Activated CD4-positive, alpha-beta memory T cell treated with anti-CD3 and anti-CD28 coated beads for 36 hours (primary cell): ENCODE measurements at regions of chr19 and their contacts with region 1.

Region 1: DNA sequence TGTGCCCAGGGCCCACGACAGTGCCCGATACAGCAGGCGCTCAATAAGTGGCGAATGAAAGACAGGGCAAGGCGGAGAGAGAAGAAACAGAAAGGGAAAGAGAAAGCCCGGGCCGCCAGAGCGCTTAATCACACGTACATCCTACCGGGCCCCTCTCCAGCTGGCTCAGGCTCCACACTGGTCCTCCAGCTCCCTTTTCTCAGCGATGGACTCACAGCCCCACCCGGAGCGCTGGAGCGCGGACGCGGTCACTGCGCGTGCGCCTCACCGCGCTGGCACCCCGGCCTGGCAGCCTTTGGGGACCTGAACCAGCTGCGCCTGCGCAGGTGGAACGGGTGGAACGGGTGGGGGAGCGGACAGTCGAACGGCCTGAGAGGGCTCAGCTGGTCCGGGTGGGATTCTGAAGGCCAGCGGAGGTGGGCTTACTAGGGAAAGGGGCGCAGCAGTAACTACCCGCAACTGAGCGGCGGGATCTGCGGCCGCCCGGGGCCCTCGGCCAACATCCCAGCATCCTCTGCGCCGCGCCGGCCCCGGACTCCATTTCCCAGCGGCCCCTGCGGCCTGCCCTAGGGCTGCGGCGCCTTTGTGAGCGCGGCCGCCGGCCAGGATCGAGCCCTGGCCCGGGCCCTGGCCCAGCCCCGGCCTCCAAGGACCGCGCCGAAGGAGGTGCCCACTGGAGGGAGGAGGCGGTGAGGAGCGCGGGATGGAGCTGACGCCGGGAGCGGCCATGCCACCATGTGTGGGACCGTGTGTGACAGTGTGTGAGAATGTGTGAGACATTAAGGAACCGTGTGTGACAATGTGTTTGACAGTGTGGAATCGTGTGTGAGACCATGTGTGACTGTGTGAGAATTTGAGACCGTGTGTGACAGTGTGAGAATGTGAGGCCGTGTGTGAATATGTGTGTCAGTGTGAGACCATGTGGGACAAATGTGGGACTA is at the start of gene ZNF583:
- DNase-seq: peak; percentile 94
- H3K4me3 Mint-ChIP-seq: peak within 1 kb of the TSS; percentile 76
- H3K27ac Mint-ChIP-seq: peak within 1 kb of the TSS; percentile 98
- H3K4me1 Mint-ChIP-seq: peaks cover 27% of the 10 kb centered on the region
- H3K27me3 Mint-ChIP-seq: no peaks in the 10 kb centered on the region
- total RNA-seq, gene ZNF583: 1.6 to 1.8 TPM

Region 2: DNA sequence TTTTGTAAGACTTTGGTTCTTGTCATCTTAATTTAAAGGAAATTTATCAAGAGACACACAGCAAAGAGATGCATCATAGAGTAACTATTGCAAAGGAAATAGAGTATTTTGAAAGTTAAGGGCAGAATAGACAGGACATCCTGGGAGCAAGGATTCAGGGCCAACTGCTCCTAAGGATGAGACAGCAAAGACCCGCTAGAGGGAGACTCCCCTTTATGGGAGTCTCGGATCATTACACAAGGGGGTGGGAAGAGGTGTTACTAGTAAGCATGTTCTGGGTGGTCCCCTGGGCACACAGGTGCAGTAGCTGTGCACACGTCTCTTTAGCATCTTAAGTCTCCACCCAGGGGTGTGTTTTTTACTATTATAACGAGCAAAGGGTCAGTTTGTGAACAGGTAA is 192.3 kb before region 1 on chr19:
- CTCF ChIA-PET with region 1: no interaction called
- POLR2A ChIA-PET with region 1: no interaction called
- intact Hi-C with region 1: no loop called
- DNase-seq: no peak
- H3K4me3 Mint-ChIP-seq: no peak overlapping the region
- H3K27ac Mint-ChIP-seq: no peak overlapping the region
- H3K4me1 Mint-ChIP-seq: peaks cover under 1% of the 10 kb centered on the region
- H3K27me3 Mint-ChIP-seq: peaks cover 9% of the 10 kb centered on the region

Region 3: GRCh38 chr19:56393119-56394012 is 10.7 kb before region 1 on chr19 and contains the start of gene ZNF582:
- CTCF ChIA-PET with region 1: no interaction called
- POLR2A ChIA-PET with region 1: interaction called, 6 read pairs
- intact Hi-C with region 1: loop called (anchors 1 kb)
- DNase-seq: peak; percentile 94
- H3K4me3 Mint-ChIP-seq: peak within 1 kb of the TSS; percentile 77
- H3K27ac Mint-ChIP-seq: peak within 1 kb of the TSS; percentile 84
- H3K4me1 Mint-ChIP-seq: peaks cover 7% of the 10 kb centered on the region
- H3K27me3 Mint-ChIP-seq: no peaks in the 10 kb centered on the region
- total RNA-seq, gene ZNF582: 0.58 to 0.71 TPM

Region 4: DNA sequence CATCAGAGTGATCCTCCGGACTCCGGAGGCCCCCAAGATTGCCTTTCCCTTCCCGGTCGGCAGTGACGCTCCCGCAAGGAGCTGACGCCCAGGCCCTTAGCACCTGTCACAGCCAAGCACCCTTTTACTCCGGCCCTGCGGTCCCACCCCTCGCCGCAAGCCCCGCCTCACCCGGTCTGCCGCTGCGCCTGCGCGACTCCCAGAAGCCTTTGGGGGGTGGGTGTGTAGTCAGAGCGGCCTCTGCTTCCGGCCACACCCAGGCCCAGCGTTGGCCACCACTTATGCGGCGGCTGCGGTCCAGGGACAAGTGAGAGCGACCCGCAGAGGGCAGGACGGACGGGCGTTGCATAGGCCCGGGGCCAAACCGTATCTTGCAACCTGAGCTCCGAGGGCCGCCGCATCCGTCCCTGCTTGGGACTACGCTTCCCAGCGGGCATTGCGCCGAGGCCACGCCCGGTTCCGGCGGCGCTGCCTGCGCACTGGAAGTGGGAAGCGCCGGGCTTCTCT is 134.3 kb after region 1 on chr19:
- CTCF ChIA-PET with region 1: no interaction called
- POLR2A ChIA-PET with region 1: no interaction called
- intact Hi-C with region 1: loop called (anchors 1 kb)
- DNase-seq: peak; percentile 92
- H3K4me3 Mint-ChIP-seq: peak overlapping the region; percentile 78
- H3K27ac Mint-ChIP-seq: peak overlapping the region; percentile 86
- H3K4me1 Mint-ChIP-seq: peaks cover 15% of the 10 kb centered on the region
- H3K27me3 Mint-ChIP-seq: peaks cover 6% of the 10 kb centered on the region

Region 5: DNA sequence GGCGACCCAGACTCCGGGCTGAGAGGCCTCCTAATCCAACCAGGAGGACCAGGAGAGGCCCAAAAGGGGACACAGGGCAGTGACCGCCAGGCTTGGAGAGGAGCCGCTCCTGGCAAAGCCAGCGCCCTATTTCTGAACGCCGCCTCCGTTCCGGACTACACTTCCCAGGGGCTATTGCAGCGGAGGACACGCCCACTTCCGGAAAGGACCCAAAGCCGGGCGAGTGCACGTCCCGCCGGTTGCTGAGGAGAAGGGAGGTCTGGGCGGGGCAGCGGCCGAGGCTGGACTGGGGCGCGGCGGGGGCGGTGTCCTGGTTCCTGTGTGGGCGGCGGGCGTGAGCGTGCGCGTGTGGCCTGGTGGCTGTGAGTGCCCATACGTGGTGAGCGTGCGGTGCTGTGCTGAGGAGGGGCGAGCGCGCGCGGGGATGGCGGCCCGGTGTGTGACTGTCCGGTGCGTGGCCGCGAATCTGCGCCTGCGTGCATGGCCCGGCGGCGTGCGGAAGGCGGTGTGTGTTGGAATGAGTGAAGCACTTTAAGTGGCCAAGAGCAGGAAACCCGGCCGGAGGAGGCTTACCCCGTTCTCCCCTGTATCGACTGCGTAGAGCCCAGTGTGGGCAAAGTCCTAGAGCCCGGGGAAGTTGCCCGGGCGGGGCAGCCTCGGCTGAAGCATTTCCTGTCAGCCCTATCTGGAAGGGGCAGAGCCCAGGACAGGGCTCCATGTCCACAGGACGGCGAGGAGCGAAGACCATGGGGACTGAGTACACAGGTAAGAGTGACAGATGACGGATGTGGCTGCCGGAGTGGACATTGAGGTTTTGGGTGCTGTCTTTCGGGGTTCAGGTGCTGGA is 163.5 kb after region 1 on chr19 and contains the start of gene ZNF470:
- CTCF ChIA-PET with region 1: no interaction called
- POLR2A ChIA-PET with region 1: no interaction called
- intact Hi-C with region 1: loop called (anchors 2 kb)
- DNase-seq: peak; percentile 92
- H3K4me3 Mint-ChIP-seq: peak within 1 kb of the TSS; percentile 92
- H3K27ac Mint-ChIP-seq: peak within 1 kb of the TSS; percentile 79
- H3K4me1 Mint-ChIP-seq: peaks cover 13% of the 10 kb centered on the region
- H3K27me3 Mint-ChIP-seq: no peaks in the 10 kb centered on the region
- total RNA-seq, gene ZNF470: 1.7 to 1.8 TPM

Region 6: GRCh38 chr19:56594783-56595547 is 190.9 kb after region 1 on chr19 and contains the start of gene ZNF71:
- CTCF ChIA-PET with region 1: no interaction called
- POLR2A ChIA-PET with region 1: no interaction called
- intact Hi-C with region 1: loop called (anchors 5 kb)
- DNase-seq: peak; percentile 92
- H3K4me3 Mint-ChIP-seq: peak within 1 kb of the TSS; percentile 80
- H3K27ac Mint-ChIP-seq: peak within 1 kb of the TSS; percentile 39
- H3K4me1 Mint-ChIP-seq: peaks cover 19% of the 10 kb centered on the region
- H3K27me3 Mint-ChIP-seq: no peaks in the 10 kb centered on the region
- total RNA-seq, gene ZNF71: 2.7 to 3.1 TPM